Left cardiac atrium (tissue), 4 donors: ENCODE measurements at regions of chr5 and their contacts with region 1.

Region 1: GRCh38 chr5:96572864-96573512 is 89.2 kb upstream of the CAST start:
- DNase-seq: no peak
- ATAC-seq: peak in 1 of 2 donors; percentile 25

Region 2: DNA sequence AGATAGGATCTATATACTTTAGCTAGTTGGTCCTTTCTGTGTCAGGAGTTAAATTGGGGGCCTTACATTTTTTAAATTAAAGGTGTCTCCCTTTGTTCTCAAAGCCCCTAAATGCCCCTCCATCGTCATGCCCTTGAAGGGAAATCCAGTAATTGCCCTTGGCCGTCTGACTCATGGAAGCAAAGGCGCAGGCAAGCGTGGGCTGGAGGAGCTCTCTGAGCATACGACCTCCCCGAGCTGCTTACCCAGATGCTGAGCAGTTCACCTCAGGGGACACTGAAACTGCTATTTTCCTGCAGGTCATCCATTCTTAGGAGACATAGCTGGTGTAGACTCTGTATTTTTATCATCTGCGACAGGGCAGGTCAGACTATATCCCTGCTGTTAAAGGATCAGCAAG is 163.0 kb before region 1 on chr5:
- intact Hi-C with region 1: loop called in 1 of 2 experiments (anchors 10 kb)
- DNase-seq: no peak
- ATAC-seq: no peak